ENCODE measurements at regions of chr3 and their contacts with region 1.

Region 1: DNA sequence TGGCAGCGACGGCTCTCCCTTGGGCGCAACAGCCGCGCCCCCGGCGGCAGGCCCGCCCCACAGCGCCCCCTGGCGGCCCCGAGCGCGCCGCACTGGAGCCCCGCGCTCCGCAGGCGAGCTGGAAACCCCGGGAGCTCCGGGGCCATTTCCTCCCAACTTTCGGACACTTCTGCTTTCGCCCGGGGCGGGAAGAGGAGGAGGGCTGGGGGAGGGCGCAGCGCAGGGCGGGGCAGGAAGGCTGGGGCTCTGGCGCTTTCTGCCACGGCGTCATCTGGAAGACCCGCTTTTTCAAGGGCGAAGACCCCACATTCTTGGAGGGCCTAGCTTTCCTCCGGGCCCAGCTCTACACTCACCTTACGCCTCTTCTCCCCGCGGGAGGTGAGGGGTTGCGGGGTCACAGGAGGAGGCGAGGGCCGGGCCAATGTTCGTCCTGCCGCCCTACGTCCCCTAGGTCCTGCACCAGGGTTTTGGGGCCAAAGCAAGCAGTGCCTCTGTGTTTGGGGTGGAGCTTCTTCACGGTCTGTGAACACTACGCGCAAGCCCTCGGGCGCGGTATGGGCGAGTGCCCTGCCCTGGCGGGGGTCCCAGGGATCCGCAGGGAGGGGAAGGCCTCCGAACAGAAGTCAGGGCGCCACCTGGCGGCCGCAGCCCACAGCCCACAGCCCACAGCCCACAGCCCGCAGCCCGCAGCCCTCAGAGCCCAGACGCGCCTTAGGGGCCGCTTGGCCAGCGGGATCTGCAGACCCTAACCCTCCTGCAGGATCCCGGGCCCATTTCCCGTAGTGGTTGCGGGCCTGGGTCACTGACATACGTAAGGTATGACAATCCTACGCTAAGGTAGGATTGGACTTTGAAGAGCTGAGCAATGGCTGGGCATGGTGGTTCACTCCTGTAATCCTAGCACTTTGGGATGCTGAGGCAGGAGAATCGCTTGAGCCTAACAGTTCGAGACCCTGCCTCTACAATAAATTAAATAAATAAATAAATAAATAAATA is 31.1 kb downstream of the FOXL2 start:
- DNase-seq: peak; percentile 79 to 88
- ATAC-seq: peak; percentile 87 to 91 (median 88)
- H3K4me3 ChIP-seq: peak overlapping the region; percentile 63
- H3K4me3 Mint-ChIP-seq: peak overlapping the region; percentile 87
- H3K27ac ChIP-seq: peak overlapping the region; percentile 12
- H3K27ac Mint-ChIP-seq: peak overlapping the region in 1 of 2 donors; percentile 79
- H3K4me1 ChIP-seq: peaks cover 18% of the 10 kb centered on the region
- H3K4me1 Mint-ChIP-seq: peaks cover 4 to 7% of the 10 kb centered on the region in 2 donors
- H3K27me3 ChIP-seq: peaks cover 2% of the 10 kb centered on the region
- H3K27me3 Mint-ChIP-seq: peaks cover 8 to 13% of the 10 kb centered on the region in 2 donors
- CTCF ChIP-seq: peak; percentile 86

Region 2: GRCh38 chr3:138686771-138687221 is 229.0 kb before region 1 on chr3:
- intact Hi-C with region 1: loop called (anchors 2 kb)
- DNase-seq: peak in 1 of 2 donors; percentile 16
- ATAC-seq: peak; percentile 90 to 97 (median 91)
- H3K4me3 ChIP-seq: no peak overlapping the region
- H3K4me3 Mint-ChIP-seq: peak overlapping the region; percentile 67
- H3K27ac ChIP-seq: peak overlapping the region; percentile 42
- H3K27ac Mint-ChIP-seq: peak overlapping the region; percentile 74 to 86
- H3K4me1 ChIP-seq: peaks cover 10% of the 10 kb centered on the region
- H3K4me1 Mint-ChIP-seq: peaks cover 20 to 22% of the 10 kb centered on the region in 2 donors
- H3K27me3 ChIP-seq: no peaks in the 10 kb centered on the region
- H3K27me3 Mint-ChIP-seq: no peaks in the 10 kb centered on the region
- CTCF ChIP-seq: no peak

Region 3: DNA sequence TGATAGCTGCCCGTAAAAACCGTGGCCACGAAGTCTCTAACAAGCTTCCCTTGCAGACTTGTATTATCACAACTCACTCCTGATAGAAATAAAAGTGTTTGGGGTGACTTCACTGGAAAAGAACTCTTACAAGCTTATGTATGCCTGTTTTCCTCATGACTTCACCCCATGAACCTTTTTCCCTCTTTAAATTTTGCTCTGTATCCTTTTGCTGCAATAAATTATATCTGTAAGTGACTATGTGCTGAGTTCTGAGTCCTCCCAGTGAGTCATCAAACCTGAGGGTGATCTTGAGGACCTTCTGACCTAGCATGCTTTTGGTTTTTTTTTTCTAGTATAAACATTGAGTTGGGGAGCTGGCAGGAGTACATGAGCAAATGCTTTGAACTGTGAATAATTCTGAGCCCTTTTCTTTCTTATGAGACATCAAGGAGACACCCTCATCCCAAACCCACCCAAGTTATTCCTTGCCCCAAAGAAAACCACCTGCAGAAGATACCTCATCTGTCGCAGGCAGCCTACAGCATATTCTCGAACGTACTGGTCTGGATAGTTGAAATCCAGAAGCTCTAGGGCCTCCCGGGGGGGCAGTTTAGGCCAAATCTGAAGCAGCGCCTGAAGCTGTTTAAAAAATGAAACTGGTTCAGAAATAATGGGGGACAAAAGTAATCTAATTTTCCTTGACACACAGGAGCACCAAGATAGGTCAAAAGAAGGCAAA is 221.4 kb before region 1 on chr3:
- intact Hi-C with region 1: loop called (anchors 1 kb)
- DNase-seq: no peak
- ATAC-seq: no peak
- H3K4me3 ChIP-seq: no peak overlapping the region
- H3K4me3 Mint-ChIP-seq: no peak overlapping the region
- H3K27ac ChIP-seq: no peak overlapping the region
- H3K27ac Mint-ChIP-seq: no peak overlapping the region
- H3K4me1 ChIP-seq: no peaks in the 10 kb centered on the region
- H3K4me1 Mint-ChIP-seq: no peaks in the 10 kb centered on the region
- H3K27me3 ChIP-seq: no peaks in the 10 kb centered on the region
- H3K27me3 Mint-ChIP-seq: no peaks in the 10 kb centered on the region
- CTCF ChIP-seq: no peak

Region 4: GRCh38 chr3:138834359-138835212 is 81.2 kb before region 1 on chr3 and contains the start of gene PIK3CB:
- intact Hi-C with region 1: loop called (anchors 2 kb)
- DNase-seq: peak; percentile 72 to 89
- ATAC-seq: peak; percentile 88 to 94 (median 93)
- H3K4me3 ChIP-seq: peak within 1 kb of the TSS; percentile 67
- H3K4me3 Mint-ChIP-seq: peak within 1 kb of the TSS; percentile 95
- H3K27ac ChIP-seq: peak within 1 kb of the TSS; percentile 60
- H3K27ac Mint-ChIP-seq: peak within 1 kb of the TSS; percentile 81 to 88
- H3K4me1 ChIP-seq: peaks cover 17% of the 10 kb centered on the region
- H3K4me1 Mint-ChIP-seq: peaks cover 18% of the 10 kb centered on the region in 2 donors
- H3K27me3 ChIP-seq: no peaks in the 10 kb centered on the region
- H3K27me3 Mint-ChIP-seq: no peaks in the 10 kb centered on the region
- CTCF ChIP-seq: no peak
- total RNA-seq, gene PIK3CB: 13.2 to 20.2 (median 18.0) TPM

Measured in natural killer cell (primary cell).